ENCODE measurements at regions of chr12 and their contacts with region 1.

Region 1: DNA sequence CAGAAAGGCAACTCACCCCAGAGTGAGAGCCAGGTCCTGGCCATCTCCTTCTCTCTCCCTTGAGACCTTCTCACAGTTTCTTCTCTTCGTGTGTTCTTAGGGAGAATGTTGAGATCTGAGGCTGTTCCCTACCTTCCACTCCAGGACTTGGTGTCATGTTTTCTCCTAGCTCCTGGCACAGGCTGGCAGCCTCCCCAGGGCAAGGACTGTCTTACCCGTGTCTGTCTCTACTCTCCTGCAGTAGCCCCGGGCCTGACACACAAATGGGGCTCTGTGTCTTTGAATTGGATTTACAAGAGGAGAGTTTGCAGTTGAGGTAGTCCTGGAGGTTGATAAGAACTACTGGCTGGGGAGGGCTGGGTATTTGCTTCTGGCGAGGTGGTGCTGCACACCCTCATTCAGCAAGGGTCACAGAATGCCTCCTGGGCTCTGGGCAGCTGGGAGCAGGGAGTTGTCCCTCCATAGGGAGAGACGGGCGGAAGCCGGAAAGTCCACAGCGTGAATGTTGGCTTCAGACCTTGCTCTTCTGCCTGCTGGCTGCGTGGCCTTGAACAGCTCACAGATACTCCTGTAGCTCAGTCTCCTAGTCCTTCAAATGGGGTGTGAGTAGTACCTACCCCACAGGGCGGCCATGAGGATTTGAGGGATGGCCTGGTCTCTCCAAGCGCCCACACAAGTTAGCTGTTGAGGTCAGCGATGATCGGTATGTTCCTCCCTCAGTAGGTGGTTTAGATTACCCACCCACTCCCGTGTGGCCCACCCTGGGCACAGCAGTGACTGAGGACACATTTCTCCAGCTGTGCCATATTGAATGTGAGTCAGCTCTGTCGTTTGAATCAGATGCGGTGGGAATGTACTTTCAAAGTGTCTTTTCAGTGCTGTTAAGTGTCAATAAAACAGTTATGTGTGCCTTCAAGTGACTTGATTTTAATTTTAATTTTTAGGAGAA is 10.2 kb downstream of the EP400 start:
- DNase-seq: no peak
- H3K4me3 ChIP-seq: no peak overlapping the region
- H3K27me3 ChIP-seq: no peaks in the 10 kb centered on the region
- CTCF ChIP-seq: no peak

Region 2: GRCh38 chr12:131092901-131093603 is 866.9 kb before region 1 on chr12:
- CTCF ChIA-PET with region 1: no interaction called
- POLR2A ChIA-PET with region 1: interaction called, 10 read pairs
- DNase-seq: no peak
- H3K4me3 ChIP-seq: no peak overlapping the region
- H3K27me3 ChIP-seq: no peaks in the 10 kb centered on the region
- CTCF ChIP-seq: no peak

Measured in BJ (cell line).